CD8-positive, alpha-beta T cell (primary cell): ENCODE measurements at regions of chr16 and their contacts with region 1.

Region 1: GRCh38 chr16:66947302-66948065 is 12.2 kb downstream of the CES2 start:
- DNase-seq: peak; percentile 67 to 90 (median 85)
- ATAC-seq: peak; percentile 94
- H3K4me3 ChIP-seq: peak overlapping the region; percentile 58 to 65
- H3K4me3 Mint-ChIP-seq: peak overlapping the region; percentile 89
- H3K27ac ChIP-seq: no peak overlapping the region
- H3K27ac Mint-ChIP-seq: no peak overlapping the region
- H3K4me1 ChIP-seq: peaks cover 17% of the 10 kb centered on the region
- H3K4me1 Mint-ChIP-seq: peaks cover 19% of the 10 kb centered on the region
- H3K27me3 ChIP-seq: peaks cover 0 to 19% of the 10 kb centered on the region in 2 experiments
- H3K27me3 Mint-ChIP-seq: peaks cover 22% of the 10 kb centered on the region
- CTCF ChIP-seq: peak; percentile 89

Region 2: DNA sequence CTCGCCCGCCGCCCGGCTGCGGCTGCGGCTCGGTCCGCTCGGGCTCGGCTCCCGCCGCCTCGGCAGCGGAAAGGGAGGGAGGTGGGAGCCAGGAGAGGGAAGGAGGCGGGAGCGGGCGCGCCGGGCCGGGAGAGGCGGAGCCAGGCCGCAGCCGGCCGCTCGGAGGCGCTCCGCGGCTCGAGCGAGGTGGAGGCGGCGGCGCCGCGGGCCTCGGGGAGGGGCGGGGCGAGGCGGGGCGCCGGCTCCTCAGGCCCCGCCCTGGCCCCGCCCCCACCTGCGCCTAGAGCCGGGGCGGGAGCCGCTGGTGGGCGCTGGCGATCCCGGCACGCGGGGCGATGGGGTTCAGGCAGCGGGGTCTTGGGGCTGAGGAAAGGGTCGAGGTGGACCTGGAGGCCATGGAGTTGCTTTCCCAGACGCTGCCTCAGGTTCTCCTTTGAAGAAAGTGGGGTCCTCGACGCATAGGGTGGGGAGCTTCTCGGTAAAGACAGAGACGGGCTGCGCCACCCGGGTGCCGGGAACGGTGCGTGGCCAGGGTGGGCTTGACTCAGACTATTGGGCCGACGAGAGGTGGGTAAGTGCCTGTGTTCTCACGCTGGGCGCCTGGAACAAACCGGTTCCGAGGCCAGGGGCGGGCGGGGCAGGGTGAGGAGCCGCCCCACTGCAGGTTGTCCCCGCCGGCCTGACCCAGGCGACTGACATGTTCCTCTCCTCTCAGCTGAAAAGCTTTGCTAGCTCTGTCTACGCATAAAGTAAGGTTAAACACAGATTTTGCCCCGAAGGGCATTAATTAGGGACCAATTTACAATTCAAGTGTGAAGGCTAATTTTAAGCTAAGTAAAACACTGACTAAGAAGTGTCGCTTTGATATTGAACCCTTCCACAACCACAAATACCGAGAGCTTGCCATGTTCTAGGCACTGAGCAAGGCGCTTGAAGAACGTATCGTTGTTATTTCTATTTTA is 250.5 kb before region 1 on chr16 and contains the start of gene CMTM4:
- CTCF ChIA-PET with region 1: no interaction called
- POLR2A ChIA-PET with region 1: no interaction called
- intact Hi-C with region 1: loop called in 1 of 2 experiments (anchors 2 kb)
- DNase-seq: peak; percentile 48 to 90 (median 75)
- ATAC-seq: peak; percentile 96
- H3K4me3 ChIP-seq: peak within 1 kb of the TSS; percentile 69 to 83
- H3K4me3 Mint-ChIP-seq: peak within 1 kb of the TSS; percentile 84
- H3K27ac ChIP-seq: no peak within 1 kb of the TSS
- H3K27ac Mint-ChIP-seq: peak within 1 kb of the TSS; percentile 41
- H3K4me1 ChIP-seq: peaks cover 19% of the 10 kb centered on the region
- H3K4me1 Mint-ChIP-seq: peaks cover 17% of the 10 kb centered on the region
- H3K27me3 ChIP-seq: no peaks in the 10 kb centered on the region
- H3K27me3 Mint-ChIP-seq: peaks cover 5% of the 10 kb centered on the region
- CTCF ChIP-seq: no peak
- total RNA-seq, gene CMTM4: 0.84 to 0.89 TPM

Region 3: GRCh38 chr16:67109407-67110135 is 162.1 kb after region 1 on chr16 and contains the start of gene PHAF1:
- CTCF ChIA-PET with region 1: no interaction called
- POLR2A ChIA-PET with region 1: no interaction called
- intact Hi-C with region 1: loop called in 1 of 2 experiments (anchors 2 kb)
- DNase-seq: peak; percentile 91 to 99 (median 96)
- ATAC-seq: peak; percentile 93
- H3K4me3 ChIP-seq: peak within 1 kb of the TSS; percentile 83 to 92
- H3K4me3 Mint-ChIP-seq: peak within 1 kb of the TSS; percentile 95
- H3K27ac ChIP-seq: peak within 1 kb of the TSS; percentile 26 to 51
- H3K27ac Mint-ChIP-seq: peak within 1 kb of the TSS; percentile 89
- H3K4me1 ChIP-seq: peaks cover 19% of the 10 kb centered on the region
- H3K4me1 Mint-ChIP-seq: peaks cover 32% of the 10 kb centered on the region
- H3K27me3 ChIP-seq: no peaks in the 10 kb centered on the region
- H3K27me3 Mint-ChIP-seq: no peaks in the 10 kb centered on the region
- CTCF ChIP-seq: no peak
- total RNA-seq, gene PHAF1: 9.6 to 9.7 TPM

Region 4: GRCh38 chr16:67129422-67129821 is 181.9 kb after region 1 on chr16:
- CTCF ChIA-PET with region 1: no interaction called
- POLR2A ChIA-PET with region 1: no interaction called
- intact Hi-C with region 1: no loop called
- DNase-seq: no peak
- ATAC-seq: no peak
- H3K4me3 ChIP-seq: no peak overlapping the region
- H3K4me3 Mint-ChIP-seq: no peak overlapping the region
- H3K27ac ChIP-seq: no peak overlapping the region
- H3K27ac Mint-ChIP-seq: no peak overlapping the region
- H3K4me1 ChIP-seq: no peaks in the 10 kb centered on the region
- H3K4me1 Mint-ChIP-seq: no peaks in the 10 kb centered on the region
- H3K27me3 ChIP-seq: no peaks in the 10 kb centered on the region
- H3K27me3 Mint-ChIP-seq: no peaks in the 10 kb centered on the region
- CTCF ChIP-seq: no peak